Sciatic nerve (tissue), 2 donors: ENCODE measurements at regions of chr18 and their contacts with region 1.

Region 1: GRCh38 chr18:39960550-39960949 is 1994.5 kb upstream of the PIK3C3 start:
- DNase-seq: no peak
- ATAC-seq: no peak

Region 2: GRCh38 chr18:38654946-38655345 is 1305.6 kb before region 1 on chr18:
- intact Hi-C with region 1: loop called (anchors 5 kb)
- DNase-seq: no peak
- ATAC-seq: no peak